ENCODE measurements at regions of chr1 and their contacts with region 1.

Region 1: DNA sequence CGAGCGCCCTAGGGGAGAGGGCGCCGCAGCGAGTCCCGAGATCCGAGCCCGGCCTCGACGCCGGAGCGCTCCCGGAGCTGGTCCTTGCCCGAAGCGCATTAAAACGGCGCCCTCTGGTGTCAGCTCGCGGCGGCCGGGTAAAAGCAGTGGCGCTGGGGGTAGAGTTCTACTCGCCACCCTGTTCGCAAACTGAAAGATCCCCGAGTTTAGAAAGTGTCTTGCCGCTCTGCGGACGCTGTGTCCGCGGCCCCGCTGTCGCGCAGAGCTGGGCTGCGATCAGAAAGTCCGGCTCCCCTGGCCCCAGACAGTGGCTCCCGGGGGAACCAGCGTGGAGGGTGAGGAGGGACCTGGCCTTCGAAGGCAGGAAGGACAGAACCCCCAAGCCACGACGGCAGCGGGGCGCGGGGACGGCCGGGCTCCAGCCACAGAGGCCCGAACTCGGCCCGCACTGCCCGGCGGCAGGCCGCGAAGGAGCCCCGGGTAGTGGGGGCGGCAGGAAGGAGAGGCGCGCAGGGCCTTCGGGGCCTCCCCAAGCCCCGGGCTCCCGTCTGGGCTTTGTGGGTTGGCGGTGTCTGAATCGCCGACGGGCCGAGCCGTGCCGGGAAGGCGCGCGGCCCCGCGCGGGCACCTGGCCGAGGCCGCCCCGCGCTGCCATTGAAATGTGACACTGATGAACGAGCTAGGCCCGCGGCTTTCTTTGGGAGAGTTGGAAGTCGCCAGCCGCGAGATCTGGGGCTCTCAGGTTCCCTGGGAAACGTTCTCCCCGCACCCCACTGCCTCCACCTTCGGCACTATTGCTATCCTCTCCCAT is 39.1 kb upstream of the NFIA start:
- DNase-seq: peak; percentile 79
- H3K4me3 ChIP-seq: peak overlapping the region; percentile 41 to 46
- H3K27ac ChIP-seq: peak overlapping the region; percentile 76
- H3K4me1 ChIP-seq: no peaks in the 10 kb centered on the region
- H3K27me3 ChIP-seq: no peaks in the 10 kb centered on the region
- CTCF ChIP-seq: peak; percentile 85 to 92 (median 87)
- POLR2A ChIP-seq: no peak

Region 2: DNA sequence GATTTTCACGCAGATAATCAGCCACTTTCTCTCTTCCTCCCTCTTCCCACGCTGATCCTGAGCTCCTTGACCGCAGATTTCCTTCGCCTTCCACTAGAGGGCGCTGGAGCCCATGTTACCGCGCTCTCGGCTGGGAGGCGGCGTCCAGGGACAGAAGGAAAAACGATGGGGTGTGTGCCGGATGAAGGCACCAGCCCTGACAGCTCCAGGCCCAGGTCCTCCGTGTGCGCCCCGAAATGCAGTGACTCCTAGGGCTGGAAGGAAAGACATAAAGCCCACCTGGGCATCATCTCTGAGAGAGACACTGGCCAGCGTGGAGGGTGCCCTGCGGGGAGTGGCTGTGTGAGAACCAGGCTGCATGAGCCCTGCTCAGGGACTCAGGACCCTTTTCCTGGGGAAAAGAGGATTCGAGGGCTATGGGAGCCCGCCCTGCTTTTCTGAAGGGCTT is 1071.7 kb before region 1 on chr1:
- intact Hi-C with region 1: loop called (anchors 5 kb)
- DNase-seq: peak; percentile 60
- H3K4me3 ChIP-seq: no peak overlapping the region
- H3K27ac ChIP-seq: no peak overlapping the region
- H3K4me1 ChIP-seq: peaks cover 11% of the 10 kb centered on the region
- H3K27me3 ChIP-seq: no peaks in the 10 kb centered on the region
- CTCF ChIP-seq: peak; percentile 72 to 89 (median 86)
- POLR2A ChIP-seq: no peak

Region 3: GRCh38 chr1:60160141-60160540 is 883.1 kb before region 1 on chr1:
- intact Hi-C with region 1: loop called (anchors 2 kb)
- DNase-seq: no peak
- H3K4me3 ChIP-seq: no peak overlapping the region
- H3K27ac ChIP-seq: no peak overlapping the region
- H3K4me1 ChIP-seq: peaks cover 3% of the 10 kb centered on the region
- H3K27me3 ChIP-seq: no peaks in the 10 kb centered on the region
- CTCF ChIP-seq: no peak
- POLR2A ChIP-seq: no peak

Region 4: DNA sequence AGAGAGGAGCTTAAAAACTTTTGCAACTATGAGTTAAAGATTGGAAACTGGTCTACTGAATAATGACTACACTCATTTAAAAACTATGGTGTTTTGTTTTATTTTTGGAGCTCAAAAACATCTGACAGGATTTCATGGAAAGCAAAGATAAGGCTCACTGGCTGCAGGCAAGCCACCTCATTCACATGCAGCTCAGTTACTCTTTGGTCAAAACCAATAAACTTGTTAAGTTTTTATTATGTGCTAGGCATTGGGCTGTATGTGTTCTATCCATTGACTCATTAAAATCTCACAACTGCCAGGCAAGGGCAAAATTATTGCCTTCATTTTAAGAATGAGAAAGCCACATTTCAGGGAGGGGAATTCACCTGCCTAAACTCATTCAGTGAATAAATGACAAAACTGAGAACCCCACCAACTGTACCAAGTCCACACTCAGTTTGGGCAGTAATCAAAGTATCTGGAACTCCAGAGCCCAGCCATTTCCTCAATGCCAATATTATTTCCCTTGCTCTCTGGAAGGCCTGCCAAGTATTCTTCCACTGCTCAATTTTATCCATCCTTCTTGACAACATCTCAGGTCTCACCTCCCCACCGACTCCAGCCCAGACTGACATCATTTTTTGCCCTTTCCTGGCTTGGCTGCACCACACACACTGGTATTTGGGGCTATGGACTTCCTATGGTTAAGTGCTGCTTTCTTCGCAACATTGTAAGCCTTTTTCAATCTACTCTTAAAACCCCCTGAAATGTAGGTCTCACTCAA is 361.9 kb before region 1 on chr1:
- intact Hi-C with region 1: no loop called
- DNase-seq: no peak
- H3K4me3 ChIP-seq: no peak overlapping the region
- H3K27ac ChIP-seq: no peak overlapping the region
- H3K4me1 ChIP-seq: no peaks in the 10 kb centered on the region
- H3K27me3 ChIP-seq: no peaks in the 10 kb centered on the region
- CTCF ChIP-seq: no peak
- POLR2A ChIP-seq: no peak

Region 5: GRCh38 chr1:60969971-60970509 is 73.2 kb before region 1 on chr1:
- intact Hi-C with region 1: loop called (anchors 2 kb)
- DNase-seq: no peak
- H3K4me3 ChIP-seq: no peak overlapping the region
- H3K27ac ChIP-seq: no peak overlapping the region
- H3K4me1 ChIP-seq: no peaks in the 10 kb centered on the region
- H3K27me3 ChIP-seq: no peaks in the 10 kb centered on the region
- CTCF ChIP-seq: peak in 3 of 4 experiments; percentile 31 to 63 (median 57)
- POLR2A ChIP-seq: no peak